ENCODE measurements at regions of chr5 and their contacts with region 1.

Region 1: DNA sequence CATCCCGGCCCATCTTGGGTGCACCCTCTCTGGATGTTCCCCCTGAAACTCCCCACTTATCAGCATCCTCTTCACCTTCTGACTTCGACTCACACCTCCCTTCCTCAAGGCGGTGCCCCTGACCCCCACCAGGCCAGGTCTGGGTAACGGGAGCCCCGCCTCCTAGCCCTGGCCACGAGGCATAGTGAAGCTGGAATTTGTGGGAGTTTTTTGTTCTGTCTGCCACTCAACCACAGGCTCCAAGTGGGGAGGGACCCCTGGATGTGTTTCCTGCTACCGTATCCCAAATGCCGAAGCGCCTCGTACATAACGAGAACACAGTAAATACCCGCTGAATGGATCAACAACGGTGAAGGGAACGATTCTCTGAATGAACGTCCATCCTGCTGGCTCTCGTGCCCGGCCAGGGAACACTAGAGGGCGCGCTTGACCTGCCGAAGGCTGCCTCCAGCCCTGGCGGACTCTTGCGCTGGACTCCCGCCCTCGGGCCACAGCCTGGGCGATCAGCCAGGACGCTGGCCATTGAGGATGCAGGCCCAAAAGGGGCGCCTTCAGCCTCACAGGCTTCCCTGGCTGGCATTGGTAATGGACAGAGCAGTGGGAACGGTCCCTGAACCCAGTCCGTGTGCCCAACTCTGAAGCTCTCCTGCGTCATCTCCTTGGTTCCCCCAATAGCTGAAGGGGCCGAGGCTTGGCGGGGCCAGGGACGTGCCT is 47.3 kb upstream of the PHYKPL start:
- DNase-seq: peak; percentile 96
- H3K4me3 ChIP-seq: no peak overlapping the region
- H3K27ac ChIP-seq: no peak overlapping the region
- H3K4me1 ChIP-seq: peaks cover 0 to 12% (median 8%) of the 10 kb centered on the region in 6 donors
- H3K27me3 ChIP-seq: peaks cover 0 to 33% (median 0%) of the 10 kb centered on the region in 7 donors
- CTCF ChIP-seq: peak; percentile 72 to 93 (median 87)
- POLR2A ChIP-seq: no peak

Region 2: GRCh38 chr5:178551059-178551458 is 271.2 kb after region 1 on chr5:
- intact Hi-C with region 1: loop called (anchors 5 kb)
- DNase-seq: no peak
- H3K4me3 ChIP-seq: no peak overlapping the region
- H3K27ac ChIP-seq: no peak overlapping the region
- H3K4me1 ChIP-seq: no peaks in the 10 kb centered on the region
- H3K27me3 ChIP-seq: peaks cover 0 to 14% (median 0%) of the 10 kb centered on the region in 7 donors
- CTCF ChIP-seq: peak in 10 of 11 experiments; percentile 10 to 70 (median 43)
- POLR2A ChIP-seq: no peak

Region 3: GRCh38 chr5:178589180-178590140 is 309.6 kb after region 1 on chr5:
- intact Hi-C with region 1: loop called (anchors 10 kb)
- DNase-seq: peak; percentile 81
- H3K4me3 ChIP-seq: peak overlapping the region; percentile 38 to 77 (median 54)
- H3K27ac ChIP-seq: no peak overlapping the region
- H3K4me1 ChIP-seq: peaks cover 0 to 33% (median 20%) of the 10 kb centered on the region in 6 donors
- H3K27me3 ChIP-seq: peaks cover 0 to 58% (median 29%) of the 10 kb centered on the region in 7 donors
- CTCF ChIP-seq: no peak
- POLR2A ChIP-seq: no peak

Measured in spleen (tissue), 13 donors.